ENCODE measurements at regions of chr21 and their contacts with region 1.

Region 1: DNA sequence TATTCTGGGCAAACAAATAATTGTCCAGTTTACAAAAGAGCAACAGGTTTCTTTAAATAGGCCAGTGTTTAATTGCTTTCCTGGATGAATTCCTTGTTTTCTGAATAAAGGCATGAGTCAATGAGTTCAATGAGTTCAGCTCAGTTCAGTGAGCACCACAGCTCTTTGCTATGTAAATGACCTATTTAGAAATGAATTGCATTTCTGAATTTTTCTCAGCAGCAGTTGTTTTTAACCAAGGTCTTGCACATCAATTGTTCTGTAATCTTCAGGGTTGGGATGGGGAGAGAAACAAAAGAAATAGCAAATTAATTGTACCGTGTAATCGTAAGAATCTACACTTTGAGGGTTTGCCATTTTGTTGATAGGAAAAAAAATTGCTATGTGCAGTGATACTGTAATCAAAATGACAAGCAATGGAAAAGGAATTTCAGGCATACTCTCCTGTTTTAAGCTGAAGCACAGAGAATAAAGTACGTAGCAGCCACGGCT is 45.7 kb downstream of the MIS18A start:
- DNase-seq: no peak
- H3K4me3 ChIP-seq: no peak overlapping the region
- H3K27ac ChIP-seq: no peak overlapping the region
- H3K4me1 ChIP-seq: peaks cover 4% of the 10 kb centered on the region
- H3K27me3 ChIP-seq: peaks cover 0 to 2% of the 10 kb centered on the region in 2 experiments
- CTCF ChIP-seq: no peak
- POLR2A ChIP-seq: no peak

Region 2: DNA sequence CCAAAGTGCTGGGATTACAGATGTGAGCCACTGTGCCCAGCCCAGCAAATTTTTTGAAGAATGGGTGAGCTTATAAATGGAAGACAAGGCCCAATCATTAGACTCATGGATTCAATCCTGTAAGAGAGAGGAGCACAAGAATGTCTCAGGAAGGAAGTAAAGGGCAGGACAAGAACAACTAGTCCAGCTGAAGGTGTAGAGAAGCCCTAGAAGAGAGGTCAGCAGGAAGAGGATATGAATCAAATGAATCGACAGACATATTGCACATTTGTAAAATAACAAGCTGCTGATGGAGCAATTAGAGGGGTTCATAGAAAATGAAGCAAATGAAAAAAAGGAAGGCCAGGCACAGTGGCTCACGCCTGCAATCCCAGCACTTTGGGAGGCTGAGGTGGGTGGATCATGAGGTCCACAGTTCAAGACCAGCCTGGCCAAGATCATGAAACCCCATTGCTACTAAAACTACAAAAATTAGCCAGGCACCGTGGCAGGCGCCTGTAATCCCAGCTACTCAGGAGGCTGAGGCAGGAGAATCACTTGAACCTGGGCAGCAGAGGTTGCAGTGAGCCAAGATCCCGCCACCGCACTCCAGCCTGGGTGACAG is 29.1 kb before region 1 on chr21:
- CTCF ChIA-PET with region 1: no interaction called
- POLR2A ChIA-PET with region 1: no interaction called
- dilution Hi-C with region 1: no loop called
- intact Hi-C with region 1: loop called (anchors 2 kb)
- DNase-seq: peak; percentile 53
- H3K4me3 ChIP-seq: no peak overlapping the region
- H3K27ac ChIP-seq: peak overlapping the region; percentile 34
- H3K4me1 ChIP-seq: peaks cover 13% of the 10 kb centered on the region
- H3K27me3 ChIP-seq: no peaks in the 10 kb centered on the region
- CTCF ChIP-seq: no peak
- POLR2A ChIP-seq: no peak